Tibial artery (tissue), 4 donors: ENCODE measurements at regions of chr1 and their contacts with region 1.

Region 1: DNA sequence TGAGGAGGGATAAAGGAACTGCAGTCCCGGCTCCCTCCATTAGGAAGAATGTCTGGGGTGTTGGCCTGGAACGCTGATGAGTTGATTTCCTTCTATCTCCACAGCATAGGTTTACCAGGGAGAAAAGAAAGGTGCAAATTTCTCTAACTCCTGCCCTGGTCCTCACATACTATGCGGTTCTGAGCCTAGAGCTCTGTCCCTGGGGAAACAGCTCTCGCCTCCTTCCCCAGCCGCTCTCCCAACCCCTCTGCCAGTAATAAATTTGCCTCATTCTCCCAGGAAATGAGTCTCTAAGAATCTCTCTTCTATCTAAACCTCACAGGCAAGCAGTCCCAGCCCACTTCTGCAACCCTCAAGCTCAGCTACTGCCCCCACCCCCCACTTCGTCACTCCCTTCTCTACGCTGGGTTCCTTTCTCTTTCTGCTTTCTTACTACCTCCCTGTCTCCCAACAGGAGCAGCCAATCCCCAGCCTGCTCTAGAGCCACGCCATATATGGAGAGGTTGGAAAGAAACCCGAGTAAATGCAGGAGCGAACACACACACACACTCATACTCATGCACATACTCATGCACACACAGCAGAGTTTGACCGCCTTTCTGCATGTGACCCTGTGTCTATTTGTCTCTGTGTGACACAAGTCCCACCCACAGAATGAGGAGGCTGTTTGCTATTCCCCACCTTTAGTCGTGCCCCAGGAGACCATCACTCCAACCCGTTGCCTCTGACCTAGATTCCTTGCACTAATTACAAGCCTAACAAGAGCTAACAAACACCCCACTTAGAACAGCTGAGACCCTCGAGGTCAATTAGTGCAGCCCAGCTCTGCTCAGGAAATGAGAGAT is 13.4 kb downstream of the PLEKHO1 start:
- DNase-seq: peak; percentile 94 to 98
- H3K4me3 ChIP-seq: peak overlapping the region; percentile 40 to 46
- H3K27ac ChIP-seq: peak overlapping the region; percentile 96 to 97
- H3K4me1 ChIP-seq: peaks cover 0 to 74% (median 35%) of the 10 kb centered on the region in 4 donors
- H3K27me3 ChIP-seq: no peaks in the 10 kb centered on the region
- CTCF ChIP-seq: peak in 1 of 2 experiments; percentile 36

Region 2: GRCh38 chr1:149899460-149900293 is 263.4 kb before region 1 on chr1 and contains the start of gene BOLA1:
- intact Hi-C with region 1: no loop called
- DNase-seq: peak; percentile 92 to 96
- H3K4me3 ChIP-seq: peak within 1 kb of the TSS; percentile 61 to 64
- H3K27ac ChIP-seq: peak within 1 kb of the TSS; percentile 87 to 91
- H3K4me1 ChIP-seq: peaks cover 0 to 14% (median 5%) of the 10 kb centered on the region in 4 donors
- H3K27me3 ChIP-seq: no peaks in the 10 kb centered on the region
- CTCF ChIP-seq: peak in 1 of 2 experiments; percentile 22

Region 3: DNA sequence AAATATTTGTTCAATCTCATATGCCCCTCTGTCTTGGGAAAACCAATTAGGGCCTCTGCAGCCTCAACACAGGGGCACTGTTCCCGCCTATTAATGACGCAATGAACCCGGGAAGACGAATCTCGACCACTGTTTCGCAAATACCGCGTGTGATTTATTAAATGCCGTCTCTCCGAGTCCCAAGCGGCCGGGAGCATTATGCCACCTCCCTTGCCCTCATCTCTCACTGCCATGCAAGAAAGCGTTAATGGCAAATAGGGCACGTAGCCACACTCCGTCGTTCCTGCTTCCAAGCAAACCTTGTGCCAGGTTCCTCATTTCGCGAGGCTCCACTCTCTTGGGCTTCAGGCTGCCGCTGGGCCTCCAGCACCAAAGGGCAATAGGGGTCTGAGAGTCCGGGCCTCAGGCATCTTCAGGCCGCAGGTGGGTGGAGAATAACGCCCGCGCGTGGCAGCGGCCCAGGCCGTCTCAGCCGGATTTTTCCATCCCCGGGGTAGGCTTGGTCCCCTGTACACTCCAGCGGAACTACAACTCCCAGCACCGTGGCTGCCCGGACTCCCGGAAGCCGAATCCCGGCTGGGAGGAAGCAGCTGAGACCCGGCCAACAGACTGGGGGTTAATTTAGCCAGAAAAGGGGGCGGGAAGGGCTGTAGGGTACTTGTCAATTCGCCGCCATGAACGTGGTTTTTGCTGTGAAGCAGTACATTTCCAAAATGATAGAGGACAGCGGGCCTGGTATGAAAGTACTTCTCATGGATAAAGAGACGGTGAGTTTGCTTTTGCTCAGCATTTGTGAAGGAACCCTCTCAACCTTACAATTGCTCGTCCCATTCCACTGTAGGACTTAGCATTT is 95.7 kb before region 1 on chr1 and contains the start of gene VPS45:
- intact Hi-C with region 1: loop called (anchors 2 kb)
- DNase-seq: peak; percentile 91 to 95
- H3K4me3 ChIP-seq: peak within 1 kb of the TSS; percentile 61 to 65
- H3K27ac ChIP-seq: peak within 1 kb of the TSS; percentile 87 to 90
- H3K4me1 ChIP-seq: peaks cover 6 to 35% (median 16%) of the 10 kb centered on the region in 4 donors
- H3K27me3 ChIP-seq: no peaks in the 10 kb centered on the region
- CTCF ChIP-seq: peak in 1 of 2 experiments; percentile 45

Region 4: DNA sequence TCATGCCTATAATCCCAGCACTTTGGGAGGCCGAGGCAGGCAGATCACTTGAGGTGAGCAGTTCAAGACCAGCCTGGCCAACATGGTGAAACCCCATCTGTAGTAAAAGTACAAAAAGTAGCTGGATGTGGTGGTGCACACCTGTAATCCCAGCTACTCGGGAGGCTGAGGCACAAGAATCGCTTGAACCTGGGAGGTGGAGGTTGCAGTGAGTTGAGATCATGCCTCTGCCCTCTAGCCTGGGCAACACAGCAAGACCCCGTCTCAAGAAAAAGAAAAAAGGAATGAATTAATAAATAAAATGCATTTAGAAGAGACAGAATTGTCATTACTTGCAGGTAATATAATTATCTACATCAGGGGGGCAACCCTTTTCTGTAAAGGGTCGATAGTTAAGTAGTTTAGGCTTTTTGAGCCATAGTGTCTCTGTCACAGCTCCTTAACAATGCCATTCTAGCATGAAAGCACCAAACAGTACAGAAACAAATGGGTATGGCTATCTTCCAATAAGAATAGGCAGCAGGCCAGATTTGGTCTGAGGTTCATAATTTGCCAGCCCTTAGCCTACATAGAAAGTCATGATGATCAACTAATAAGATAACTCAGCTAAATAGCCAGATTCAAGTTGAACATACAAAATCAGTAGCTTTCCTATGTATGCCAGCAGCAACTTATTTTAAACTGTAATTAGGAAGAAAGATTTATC is 257.6 kb after region 1 on chr1:
- intact Hi-C with region 1: no loop called
- DNase-seq: no peak
- H3K4me3 ChIP-seq: no peak overlapping the region
- H3K27ac ChIP-seq: no peak overlapping the region
- H3K4me1 ChIP-seq: peaks cover 0 to 8% (median 3%) of the 10 kb centered on the region in 4 donors
- H3K27me3 ChIP-seq: no peaks in the 10 kb centered on the region
- CTCF ChIP-seq: no peak